Panc1 (cell line): ENCODE measurements at regions of chr6 and their contacts with region 1.

Region 1: GRCh38 chr6:111541026-111541681 is 58.1 kb upstream of the REV3L start:
- DNase-seq: no peak
- ATAC-seq: 0 out of 2 replicates have a peak, but pooled peaks have one; percentile 23
- H3K4me3 ChIP-seq: no peak overlapping the region
- H3K27ac ChIP-seq: peak overlapping the region; percentile 2; the same call in 1 of the 2 replicates
- H3K4me1 ChIP-seq: peaks cover 22% of the 10 kb centered on the region
- H3K27me3 ChIP-seq: no peaks in the 10 kb centered on the region
- CTCF ChIP-seq: no peak

Region 2: GRCh38 chr6:111276338-111277119 is 264.6 kb before region 1 on chr6:
- CTCF ChIA-PET with region 1: no interaction called
- POLR2A ChIA-PET with region 1: interaction called, 11 read pairs
- in situ Hi-C with region 1: no loop called
- intact Hi-C with region 1: no loop called
- DNase-seq: no peak
- ATAC-seq: no peak
- H3K4me3 ChIP-seq: no peak overlapping the region
- H3K27ac ChIP-seq: no peak overlapping the region
- H3K4me1 ChIP-seq: no peaks in the 10 kb centered on the region
- H3K27me3 ChIP-seq: no peaks in the 10 kb centered on the region
- CTCF ChIP-seq: no peak

Region 3: DNA sequence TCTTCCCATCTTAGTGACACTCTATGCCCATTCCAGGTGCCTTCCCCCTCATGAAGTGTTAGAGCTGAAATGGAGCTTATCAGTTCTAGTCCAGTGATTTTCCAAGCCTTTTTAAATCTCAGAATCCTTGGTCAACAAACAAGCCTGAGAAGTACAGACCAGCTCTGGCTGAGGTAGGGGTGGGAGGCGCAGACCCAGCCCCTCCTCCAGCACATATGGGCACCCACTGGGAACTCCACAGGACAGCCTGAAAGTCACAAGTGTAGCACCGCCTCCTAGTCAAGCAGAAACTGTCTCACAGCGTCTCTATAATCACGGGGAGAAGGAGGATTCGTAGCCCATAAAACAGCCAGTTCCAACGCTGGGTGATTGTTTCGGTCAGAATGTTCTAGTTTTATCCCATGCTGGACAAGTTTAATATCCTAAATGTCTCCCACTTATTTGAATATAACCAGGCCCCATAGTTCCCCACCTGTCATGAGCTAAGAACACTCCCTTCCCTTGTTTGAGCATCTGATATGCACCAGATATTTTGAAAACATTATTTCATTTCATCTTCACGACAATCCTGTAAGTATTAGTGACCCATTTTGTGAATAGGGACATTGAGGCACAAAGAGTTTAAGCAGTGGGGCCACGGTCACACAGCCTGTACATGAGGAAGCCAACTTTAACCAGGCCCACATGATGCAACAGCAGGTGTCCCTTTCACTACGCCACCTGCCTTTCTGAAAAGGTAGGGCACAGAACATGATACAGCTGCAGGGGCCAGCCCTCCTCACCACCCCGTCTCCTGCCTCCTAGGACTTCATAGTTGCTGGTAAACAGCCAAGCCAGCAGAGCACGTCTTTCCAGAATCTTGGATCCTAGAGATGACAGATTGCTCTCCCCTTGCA is 24.4 kb after region 1 on chr6:
- CTCF ChIA-PET with region 1: no interaction called
- POLR2A ChIA-PET with region 1: no interaction called
- in situ Hi-C with region 1: no loop called
- intact Hi-C with region 1: no loop called
- DNase-seq: no peak
- ATAC-seq: peak; percentile 70
- H3K4me3 ChIP-seq: no peak overlapping the region
- H3K27ac ChIP-seq: peak overlapping the region; percentile 83
- H3K4me1 ChIP-seq: peaks cover 42% of the 10 kb centered on the region
- H3K27me3 ChIP-seq: no peaks in the 10 kb centered on the region
- CTCF ChIP-seq: no peak; the same call in 1 of the 2 replicates

Region 4: GRCh38 chr6:111727802-111728201 is 186.6 kb after region 1 on chr6:
- CTCF ChIA-PET with region 1: no interaction called
- POLR2A ChIA-PET with region 1: no interaction called
- in situ Hi-C with region 1: no loop called
- intact Hi-C with region 1: no loop called
- DNase-seq: no peak
- ATAC-seq: no peak
- H3K4me3 ChIP-seq: no peak overlapping the region
- H3K27ac ChIP-seq: no peak overlapping the region
- H3K4me1 ChIP-seq: no peaks in the 10 kb centered on the region
- H3K27me3 ChIP-seq: peaks cover 21% of the 10 kb centered on the region
- CTCF ChIP-seq: peak; percentile 44

Region 5: DNA sequence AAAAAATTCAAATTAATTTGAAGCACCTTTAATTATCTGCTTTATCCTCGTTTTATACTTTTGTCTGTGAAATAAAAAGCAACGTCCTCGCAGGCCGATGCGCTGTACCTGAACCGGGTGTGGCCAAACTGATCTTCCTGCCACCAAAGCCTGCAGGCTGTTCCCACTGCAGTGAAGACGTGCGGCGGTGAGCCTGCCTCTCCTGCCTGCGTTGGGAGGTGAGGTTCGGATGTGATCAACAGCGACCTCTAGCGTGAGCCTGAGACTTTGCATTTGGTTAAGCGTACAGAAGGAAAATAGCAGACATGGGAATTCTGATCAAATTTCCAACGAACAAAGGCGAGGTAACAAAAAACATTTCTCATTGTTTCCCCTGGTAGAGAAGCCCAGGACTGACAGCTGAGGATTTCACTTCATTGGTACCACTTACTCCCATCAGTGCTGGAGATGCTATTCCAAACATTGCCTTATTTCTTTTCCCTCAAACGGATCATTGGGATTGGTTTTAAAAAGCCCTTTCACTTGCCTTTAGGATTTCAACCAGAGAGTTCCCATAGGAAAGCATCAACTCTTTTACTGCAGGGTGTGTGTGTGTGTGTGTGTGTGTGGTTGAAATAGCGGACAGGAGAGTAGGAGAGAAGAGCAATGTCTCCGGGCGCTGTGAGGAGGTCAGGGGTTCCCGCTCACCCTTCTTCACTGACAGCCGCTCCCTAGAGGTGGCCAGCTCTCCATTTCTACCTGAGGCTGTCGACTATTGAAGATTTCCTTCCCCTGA is 456.1 kb after region 1 on chr6:
- CTCF ChIA-PET with region 1: no interaction called
- POLR2A ChIA-PET with region 1: no interaction called
- in situ Hi-C with region 1: no loop called
- intact Hi-C with region 1: no loop called
- DNase-seq: peak; percentile 67
- ATAC-seq: peak; percentile 95
- H3K4me3 ChIP-seq: no peak overlapping the region
- H3K27ac ChIP-seq: no peak overlapping the region
- H3K4me1 ChIP-seq: no peaks in the 10 kb centered on the region
- H3K27me3 ChIP-seq: peaks cover 24% of the 10 kb centered on the region
- CTCF ChIP-seq: peak; percentile 98